H1 (cell line): ENCODE measurements at regions of chr2 and their contacts with region 1.

Region 1: GRCh38 chr2:135709992-135710391 is 31.7 kb upstream of the UBXN4 start:
- DNase-seq: peak in 1 of 2 experiments; percentile 81
- H3K4me3 ChIP-seq: no peak overlapping the region
- H3K27ac ChIP-seq: no peak overlapping the region
- H3K4me1 ChIP-seq: no peaks in the 10 kb centered on the region
- H3K27me3 ChIP-seq: no peaks in the 10 kb centered on the region
- CTCF ChIP-seq: peak; percentile 74 to 81 (median 79)
- EP300 ChIP-seq: no peak
- POLR2A ChIP-seq: no peak
- RAD21 ChIP-seq: peak; percentile 88 to 89

Region 2: DNA sequence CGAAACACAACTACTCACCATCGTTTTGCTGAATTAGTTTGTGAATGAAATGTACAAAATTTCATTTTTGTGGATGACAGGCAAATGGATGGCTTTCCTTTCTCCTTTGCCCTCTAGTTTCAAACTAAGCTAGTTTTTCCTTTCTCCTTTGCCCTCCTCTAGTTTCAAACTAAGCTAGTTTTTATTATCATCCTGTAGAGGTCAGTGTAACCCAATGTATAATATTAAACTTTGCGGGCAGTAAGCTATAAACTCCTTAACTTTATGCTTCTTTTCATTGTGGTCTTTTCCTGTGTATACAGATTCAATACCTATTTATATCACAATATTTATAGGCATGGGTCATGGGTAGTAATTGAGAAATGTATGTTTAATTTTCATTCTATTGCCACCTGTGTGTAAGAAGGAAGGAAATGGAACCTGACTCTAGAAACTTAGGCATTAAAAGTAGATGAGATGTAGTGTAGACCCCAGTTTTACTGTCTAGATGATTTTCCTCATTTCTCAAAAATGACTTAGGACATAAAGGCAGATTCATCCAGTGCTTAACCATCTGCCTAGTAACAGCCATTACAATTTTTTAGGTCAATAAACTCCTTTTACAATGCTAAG is 720.9 kb before region 1 on chr2:
- CTCF ChIA-PET with region 1: interaction called, 13 read pairs
- POLR2A ChIA-PET with region 1: no interaction called
- DNase-seq: no peak
- H3K4me3 ChIP-seq: no peak overlapping the region
- H3K27ac ChIP-seq: no peak overlapping the region
- H3K4me1 ChIP-seq: no peaks in the 10 kb centered on the region
- H3K27me3 ChIP-seq: no peaks in the 10 kb centered on the region
- CTCF ChIP-seq: peak in 1 of 3 experiments; percentile 46; a peak in 2 of 4 replicates
- EP300 ChIP-seq: no peak
- POLR2A ChIP-seq: no peak
- RAD21 ChIP-seq: peak; percentile 59 to 61

Region 3: GRCh38 chr2:135473567-135473966 is 236.4 kb before region 1 on chr2:
- CTCF ChIA-PET with region 1: interaction called, 32 read pairs
- POLR2A ChIA-PET with region 1: no interaction called
- DNase-seq: no peak
- H3K4me3 ChIP-seq: no peak overlapping the region
- H3K27ac ChIP-seq: no peak overlapping the region
- H3K4me1 ChIP-seq: no peaks in the 10 kb centered on the region
- H3K27me3 ChIP-seq: no peaks in the 10 kb centered on the region
- CTCF ChIP-seq: peak; percentile 34 to 51 (median 43)
- EP300 ChIP-seq: no peak
- POLR2A ChIP-seq: no peak
- RAD21 ChIP-seq: peak; percentile 72 to 76

Region 4: DNA sequence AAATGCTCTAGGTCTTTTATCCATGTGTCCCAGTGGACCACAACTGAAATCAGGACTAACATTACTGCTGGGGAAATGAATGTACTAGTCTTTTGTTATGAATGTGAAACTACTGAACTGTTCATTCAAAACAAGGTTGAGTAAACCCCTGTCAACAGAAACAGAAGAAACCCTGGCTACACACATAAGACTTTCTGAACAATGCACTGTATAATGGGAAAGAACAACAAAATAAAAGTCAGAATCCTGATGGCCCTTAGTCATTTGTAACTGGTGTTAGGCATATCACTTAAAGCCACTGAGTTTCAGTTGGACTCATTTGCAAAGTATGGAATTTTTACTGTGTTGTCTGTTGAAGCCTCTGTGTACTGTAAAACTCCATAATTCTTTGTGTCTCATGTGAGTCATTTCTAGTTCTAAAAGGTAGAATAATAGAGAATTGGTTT is 45.3 kb before region 1 on chr2:
- CTCF ChIA-PET with region 1: interaction called, 11 read pairs
- POLR2A ChIA-PET with region 1: no interaction called
- DNase-seq: no peak
- H3K4me3 ChIP-seq: no peak overlapping the region
- H3K27ac ChIP-seq: no peak overlapping the region
- H3K4me1 ChIP-seq: no peaks in the 10 kb centered on the region
- H3K27me3 ChIP-seq: peaks cover 0 to 1% (median 0%) of the 10 kb centered on the region in 4 experiments; a peak in 1 of 7 replicates
- CTCF ChIP-seq: no peak
- EP300 ChIP-seq: no peak
- POLR2A ChIP-seq: no peak
- RAD21 ChIP-seq: no peak

Region 5: DNA sequence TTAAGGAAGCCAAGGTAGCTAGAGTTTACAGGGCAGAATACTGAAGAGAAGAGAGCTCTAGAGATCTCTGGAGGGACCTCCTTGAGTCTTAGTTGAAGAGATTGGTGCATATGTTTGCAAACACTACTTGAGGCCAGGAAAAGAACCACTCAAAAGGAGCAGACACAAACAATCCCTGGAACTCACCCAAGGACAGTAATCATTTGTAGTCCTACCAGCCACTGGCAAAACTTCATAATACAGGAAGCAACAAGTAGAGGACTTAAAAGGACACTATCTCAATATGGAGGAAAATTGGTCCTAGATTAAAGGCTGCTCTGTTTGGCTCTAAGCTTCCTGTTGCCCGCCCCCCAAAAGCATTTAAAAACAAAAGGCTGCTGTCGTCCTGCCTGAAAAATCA is 15.3 kb before region 1 on chr2:
- CTCF ChIA-PET with region 1: interaction called, 28 read pairs
- POLR2A ChIA-PET with region 1: no interaction called
- DNase-seq: no peak
- H3K4me3 ChIP-seq: no peak overlapping the region
- H3K27ac ChIP-seq: no peak overlapping the region
- H3K4me1 ChIP-seq: no peaks in the 10 kb centered on the region
- H3K27me3 ChIP-seq: no peaks in the 10 kb centered on the region
- CTCF ChIP-seq: no peak
- EP300 ChIP-seq: no peak
- POLR2A ChIP-seq: no peak
- RAD21 ChIP-seq: no peak

Region 6: DNA sequence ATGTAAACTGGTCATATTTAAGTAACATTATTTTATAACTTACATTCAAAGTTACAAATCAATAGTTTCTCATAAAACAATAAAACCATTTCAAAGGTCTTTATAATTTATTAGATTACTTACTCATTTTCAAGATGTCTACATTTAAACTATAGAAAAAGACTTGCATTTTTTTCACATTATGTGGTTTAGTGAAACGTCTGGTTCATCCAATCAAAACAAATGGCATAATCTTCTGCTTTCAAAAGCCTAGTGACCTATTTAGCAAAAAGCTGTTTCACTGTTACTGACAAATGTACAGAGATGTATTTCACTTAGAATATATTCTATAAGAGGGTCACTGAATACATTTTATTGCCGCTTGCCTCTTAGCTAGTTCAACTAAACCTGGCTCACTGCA is 215.6 kb after region 1 on chr2:
- CTCF ChIA-PET with region 1: no interaction called
- POLR2A ChIA-PET with region 1: no interaction called
- DNase-seq: no peak
- H3K4me3 ChIP-seq: no peak overlapping the region
- H3K27ac ChIP-seq: no peak overlapping the region
- H3K4me1 ChIP-seq: no peaks in the 10 kb centered on the region
- H3K27me3 ChIP-seq: no peaks in the 10 kb centered on the region
- CTCF ChIP-seq: no peak
- EP300 ChIP-seq: no peak
- POLR2A ChIP-seq: no peak
- RAD21 ChIP-seq: no peak